HCT116 (cell line): ENCODE measurements at regions of chrX and their contacts with region 1.

Region 1: DNA sequence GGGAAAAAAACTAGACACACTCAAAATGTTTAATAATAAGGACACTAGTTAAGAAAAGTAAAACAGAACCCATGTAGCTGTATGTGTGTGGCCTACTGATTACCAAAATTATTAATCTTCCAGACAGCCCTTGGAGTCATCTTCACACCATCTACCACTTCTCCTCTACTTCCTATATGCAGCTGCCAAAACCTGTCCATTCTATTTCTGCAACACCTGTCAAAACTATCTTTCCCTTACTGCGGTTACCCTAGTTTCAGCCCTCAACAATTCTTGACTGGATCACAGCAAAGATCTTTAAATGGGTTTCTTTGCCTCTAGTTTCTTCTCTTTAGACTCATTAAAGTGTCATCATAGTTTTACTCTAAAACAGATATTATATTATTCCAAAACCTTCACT is 72.6 kb downstream of the GPR82 start:
- DNase-seq: no peak
- ATAC-seq: no peak
- H3K4me3 ChIP-seq: no peak overlapping the region
- H3K27ac ChIP-seq: no peak overlapping the region
- H3K4me1 ChIP-seq: no peaks in the 10 kb centered on the region
- H3K27me3 ChIP-seq: no peaks in the 10 kb centered on the region
- CTCF ChIP-seq: no peak
- POLR2A ChIP-seq: no peak
- RAD21 ChIP-seq: no peak

Region 2: GRCh38 chrX:41209853-41210252 is 586.7 kb before region 1 on chrX:
- CTCF ChIA-PET with region 1: no interaction called
- POLR2A ChIA-PET with region 1: no interaction called
- RAD21 ChIA-PET with region 1: no interaction called
- intact Hi-C with region 1: no loop called
- DNase-seq: no peak
- ATAC-seq: no peak
- H3K4me3 ChIP-seq: no peak overlapping the region
- H3K27ac ChIP-seq: no peak overlapping the region
- H3K4me1 ChIP-seq: no peaks in the 10 kb centered on the region
- H3K27me3 ChIP-seq: no peaks in the 10 kb centered on the region
- CTCF ChIP-seq: no peak
- POLR2A ChIP-seq: no peak
- RAD21 ChIP-seq: no peak

Region 3: DNA sequence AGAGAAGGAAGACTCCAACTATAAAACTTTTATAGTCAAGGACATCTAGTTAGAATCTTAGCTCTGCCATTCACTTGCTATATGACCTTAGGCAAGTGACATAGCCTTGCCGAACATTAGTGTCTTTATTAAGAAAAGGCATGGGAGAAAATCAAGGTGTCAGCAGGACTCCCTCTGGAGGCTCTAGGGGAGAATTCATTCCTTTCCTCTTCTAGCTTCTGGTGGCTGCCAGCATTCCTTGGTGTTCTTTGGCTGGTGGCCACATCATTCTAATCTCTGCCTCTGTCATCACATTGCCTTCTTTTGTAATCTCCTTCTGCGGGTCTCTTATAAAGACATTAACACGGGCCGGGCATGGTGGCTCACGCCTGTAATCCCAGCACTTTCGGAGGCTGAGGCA is 881.5 kb after region 1 on chrX:
- CTCF ChIA-PET with region 1: interaction called, 5 read pairs
- POLR2A ChIA-PET with region 1: no interaction called
- RAD21 ChIA-PET with region 1: no interaction called
- intact Hi-C with region 1: loop called (anchors 5 kb)
- DNase-seq: no peak
- ATAC-seq: peak; percentile 40; the same call in 1 of the 2 replicates
- H3K4me3 ChIP-seq: no peak overlapping the region
- H3K27ac ChIP-seq: no peak overlapping the region
- H3K4me1 ChIP-seq: no peaks in the 10 kb centered on the region
- H3K27me3 ChIP-seq: no peaks in the 10 kb centered on the region
- CTCF ChIP-seq: peak in 2 of 3 experiments; percentile 19 to 20; a peak in 1 of 6 replicates
- POLR2A ChIP-seq: no peak
- RAD21 ChIP-seq: peak; percentile 41; the same call in 1 of the 2 replicates

Region 4: GRCh38 chrX:42868791-42869435 is 1072.3 kb after region 1 on chrX:
- CTCF ChIA-PET with region 1: no interaction called
- POLR2A ChIA-PET with region 1: no interaction called
- RAD21 ChIA-PET with region 1: no interaction called
- intact Hi-C with region 1: no loop called
- DNase-seq: no peak
- ATAC-seq: no peak
- H3K4me3 ChIP-seq: no peak overlapping the region
- H3K27ac ChIP-seq: no peak overlapping the region
- H3K4me1 ChIP-seq: no peaks in the 10 kb centered on the region
- H3K27me3 ChIP-seq: no peaks in the 10 kb centered on the region
- CTCF ChIP-seq: no peak
- POLR2A ChIP-seq: no peak
- RAD21 ChIP-seq: no peak